GM18951 (cell line): ENCODE measurements at regions of chr10 and their contacts with region 1.

Region 1: DNA sequence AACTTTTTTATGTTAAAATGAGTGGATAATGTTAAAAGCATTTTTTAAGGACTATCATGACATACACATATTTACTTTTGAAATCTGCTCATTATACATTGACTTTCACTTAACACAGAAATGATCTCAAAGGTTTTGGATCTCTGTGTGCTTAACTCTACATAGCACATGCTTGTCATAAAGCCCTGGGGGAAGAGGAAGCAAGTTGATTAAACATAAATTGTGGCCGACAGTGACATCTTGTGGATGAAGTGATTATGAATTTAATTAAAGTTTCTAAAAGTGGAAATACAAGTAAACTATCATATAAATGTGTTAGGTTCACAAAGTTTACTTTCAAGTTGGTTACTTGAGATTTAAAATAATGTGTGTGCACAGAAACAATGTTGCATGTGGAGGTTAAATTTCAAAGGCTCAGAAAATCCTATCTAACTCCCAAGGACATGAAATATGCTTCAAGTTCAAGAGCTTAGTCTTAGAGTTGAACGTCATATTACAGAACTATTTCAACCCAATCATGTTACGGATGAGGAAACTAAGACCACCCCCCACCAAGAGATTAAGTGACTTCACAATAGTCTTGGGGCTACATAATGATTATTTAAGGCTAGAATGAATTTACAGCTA is 1247.7 kb downstream of the GATA3 start:
- POLR2A ChIP-seq: no peak

Region 2: DNA sequence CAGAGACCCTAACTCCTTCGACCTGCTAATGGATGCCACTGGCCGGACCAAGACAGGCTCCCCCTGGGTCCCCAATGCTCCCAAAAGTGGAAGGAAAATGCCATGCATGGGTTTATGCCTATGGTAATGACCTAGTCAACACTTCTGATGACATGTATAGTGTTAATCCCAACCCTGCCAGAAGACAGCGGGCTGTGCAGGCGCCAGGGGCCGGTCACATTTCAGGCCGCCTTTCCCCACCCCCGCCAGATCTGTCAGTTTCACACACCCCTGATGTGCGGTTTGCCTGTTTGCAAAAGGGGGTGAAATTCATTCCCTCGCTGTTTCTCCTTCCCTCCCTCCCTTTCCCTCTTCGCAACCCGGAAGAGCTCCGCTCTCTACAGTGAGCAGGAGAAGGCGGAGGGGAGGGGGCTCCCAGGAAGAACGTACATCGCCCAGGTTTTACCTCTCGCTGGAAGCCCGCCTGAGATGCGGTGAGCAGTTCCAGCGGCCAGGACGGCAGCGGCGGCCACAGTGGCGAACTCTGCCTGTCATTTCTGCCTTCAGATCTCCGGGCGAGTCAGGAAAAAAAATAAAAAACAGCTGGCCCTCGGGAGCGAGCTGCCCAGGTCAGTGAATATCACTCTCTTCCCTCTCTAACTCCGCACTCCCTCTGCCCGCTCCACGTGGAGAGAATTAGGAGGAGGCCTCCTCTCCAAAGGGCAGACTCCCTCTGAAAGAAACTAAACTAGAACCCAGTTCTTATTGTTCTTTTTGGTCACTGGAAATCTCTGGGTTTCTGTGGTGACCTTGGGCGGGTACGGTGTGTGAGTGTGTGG is 1257.1 kb before region 1 on chr10:
- in situ Hi-C with region 1: loop called (anchors 25 kb)
- POLR2A ChIP-seq: no peak

Region 3: GRCh38 chr10:8402576-8402975 is 899.7 kb before region 1 on chr10:
- in situ Hi-C with region 1: no loop called
- POLR2A ChIP-seq: no peak

Region 4: DNA sequence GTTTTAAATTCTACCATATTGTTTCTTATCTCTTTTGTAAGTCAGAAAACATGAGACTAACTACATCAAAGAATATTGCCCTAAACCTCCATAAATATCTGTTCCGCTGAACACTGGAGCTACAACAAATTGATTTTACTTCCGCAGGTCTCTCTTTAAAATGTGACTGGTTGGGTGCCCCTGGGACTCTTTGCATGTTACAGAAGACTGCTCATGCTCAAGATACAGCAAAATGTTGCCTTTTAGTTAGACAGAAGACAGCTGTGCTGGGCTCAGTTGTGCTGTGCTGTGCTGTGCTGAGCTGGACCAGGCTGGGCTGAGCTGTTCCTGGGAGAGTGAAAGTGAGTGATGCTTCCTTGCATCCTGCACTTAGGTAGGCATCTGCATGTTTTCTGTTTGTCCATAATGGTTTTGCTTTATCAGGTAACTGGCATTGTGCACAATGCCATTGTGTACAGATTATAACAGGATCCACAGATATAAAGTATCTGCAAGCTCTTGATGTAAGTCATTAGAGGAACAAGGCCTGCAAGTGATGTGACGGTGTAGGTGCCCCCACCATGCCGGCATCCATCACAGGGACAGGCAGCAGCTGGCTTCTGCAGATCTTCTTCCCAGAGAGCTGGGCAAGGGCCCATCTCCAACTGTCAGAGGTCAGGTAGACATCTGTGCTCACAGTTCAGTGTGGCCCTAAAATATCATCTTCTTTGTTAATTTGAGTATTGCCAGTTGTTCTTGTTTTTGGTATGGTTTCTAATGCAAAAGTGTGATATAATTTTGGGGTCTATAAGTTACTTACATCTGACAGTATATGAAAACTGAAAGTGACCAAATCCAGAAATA is 742.9 kb after region 1 on chr10:
- in situ Hi-C with region 1: no loop called
- POLR2A ChIP-seq: no peak